ENCODE measurements at regions of chr5 and their contacts with region 1.

Region 1: GRCh38 chr5:5141625-5142532 is 1.7 kb downstream of the ADAMTS16 start:
- DNase-seq: peak in 1 of 2 donors; percentile 58
- ATAC-seq: no peak
- H3K4me3 ChIP-seq: peak overlapping the region in 1 of 10 donors; percentile 43
- H3K27ac ChIP-seq: no peak overlapping the region
- H3K4me1 ChIP-seq: peaks cover 0 to 23% (median 17%) of the 10 kb centered on the region in 9 donors
- H3K27me3 ChIP-seq: peaks cover 17 to 48% (median 32%) of the 10 kb centered on the region in 7 donors
- CTCF ChIP-seq: peak; percentile 66 to 86 (median 78)

Region 2: GRCh38 chr5:5398046-5398445 is 256.2 kb after region 1 on chr5:
- intact Hi-C with region 1: loop called in 6 of 10 experiments (anchors 2 to 5 kb)
- DNase-seq: no peak
- ATAC-seq: no peak
- H3K4me3 ChIP-seq: no peak overlapping the region
- H3K27ac ChIP-seq: no peak overlapping the region
- H3K4me1 ChIP-seq: no peaks in the 10 kb centered on the region
- H3K27me3 ChIP-seq: no peaks in the 10 kb centered on the region
- CTCF ChIP-seq: no peak

Region 3: DNA sequence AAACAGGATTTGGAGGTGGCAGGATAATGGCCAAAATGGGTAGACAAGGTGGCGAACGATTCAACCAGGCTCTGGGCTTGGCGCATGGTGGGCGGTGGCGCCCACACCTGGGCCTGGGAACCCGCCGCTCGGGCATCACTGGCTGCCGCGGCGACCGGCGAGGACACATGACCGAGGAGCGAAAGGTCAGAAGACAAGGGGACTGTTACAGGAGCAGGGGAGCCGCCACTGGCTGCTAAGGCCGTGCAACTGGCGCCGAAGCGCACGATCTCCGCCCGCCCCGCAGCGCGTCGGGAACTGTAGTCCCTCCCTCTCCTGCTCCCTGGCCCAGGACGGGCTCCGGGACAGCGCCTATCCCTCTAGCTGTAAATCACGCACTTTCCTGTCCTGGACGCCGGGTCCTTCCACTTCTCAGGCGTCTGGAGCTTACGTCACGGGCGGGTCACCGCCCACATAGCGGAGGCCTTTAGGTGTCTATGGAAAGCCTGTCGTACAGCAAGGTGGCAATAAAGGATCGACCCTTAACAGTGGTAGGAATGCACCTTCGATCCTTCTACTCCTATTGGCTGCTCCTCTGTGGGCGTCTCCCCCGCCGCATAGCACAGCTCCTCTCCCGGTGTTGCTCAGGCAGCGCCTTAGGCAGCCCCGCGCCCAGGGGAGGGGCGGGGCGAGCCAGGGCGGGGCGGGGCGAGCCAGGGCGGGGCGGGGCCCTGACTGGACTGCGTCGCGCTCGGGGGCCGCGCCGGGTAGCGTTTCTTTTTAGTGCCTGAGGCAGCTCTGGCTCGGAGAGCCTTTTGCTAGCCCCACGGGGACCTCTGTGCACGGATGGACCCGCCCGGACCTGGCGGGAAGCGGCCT is 280.3 kb after region 1 on chr5 and contains the start of gene ICE1:
- intact Hi-C with region 1: loop called (anchors 1 to 10 kb)
- DNase-seq: peak; percentile 97 to 98
- ATAC-seq: peak; percentile 98 to 100 (median 99)
- H3K4me3 ChIP-seq: peak within 1 kb of the TSS; percentile 73 to 100 (median 94)
- H3K27ac ChIP-seq: peak within 1 kb of the TSS; percentile 82 to 99 (median 96)
- H3K4me1 ChIP-seq: peaks cover 9 to 62% (median 46%) of the 10 kb centered on the region in 9 donors
- H3K27me3 ChIP-seq: no peaks in the 10 kb centered on the region
- CTCF ChIP-seq: peak in 3 of 9 donors; percentile 15 to 26 (median 25)
- total RNA-seq, gene ICE1: 16.7 to 20.3 (median 18.6) TPM